ENCODE measurements at regions of chr20 and their contacts with region 1.

Region 1: GRCh38 chr20:3818155-3819151 is 1.9 kb upstream of the AP5S1 start:
- DNase-seq: peak; percentile 81
- H3K4me3 ChIP-seq: no peak overlapping the region
- H3K27ac ChIP-seq: peak overlapping the region; percentile 58 to 99 (median 98)
- H3K4me1 ChIP-seq: peaks cover 21 to 79% (median 55%) of the 10 kb centered on the region in 6 donors
- H3K27me3 ChIP-seq: no peaks in the 10 kb centered on the region
- CTCF ChIP-seq: peak in 9 of 11 experiments; percentile 29 to 76 (median 61)
- POLR2A ChIP-seq: no peak

Region 2: DNA sequence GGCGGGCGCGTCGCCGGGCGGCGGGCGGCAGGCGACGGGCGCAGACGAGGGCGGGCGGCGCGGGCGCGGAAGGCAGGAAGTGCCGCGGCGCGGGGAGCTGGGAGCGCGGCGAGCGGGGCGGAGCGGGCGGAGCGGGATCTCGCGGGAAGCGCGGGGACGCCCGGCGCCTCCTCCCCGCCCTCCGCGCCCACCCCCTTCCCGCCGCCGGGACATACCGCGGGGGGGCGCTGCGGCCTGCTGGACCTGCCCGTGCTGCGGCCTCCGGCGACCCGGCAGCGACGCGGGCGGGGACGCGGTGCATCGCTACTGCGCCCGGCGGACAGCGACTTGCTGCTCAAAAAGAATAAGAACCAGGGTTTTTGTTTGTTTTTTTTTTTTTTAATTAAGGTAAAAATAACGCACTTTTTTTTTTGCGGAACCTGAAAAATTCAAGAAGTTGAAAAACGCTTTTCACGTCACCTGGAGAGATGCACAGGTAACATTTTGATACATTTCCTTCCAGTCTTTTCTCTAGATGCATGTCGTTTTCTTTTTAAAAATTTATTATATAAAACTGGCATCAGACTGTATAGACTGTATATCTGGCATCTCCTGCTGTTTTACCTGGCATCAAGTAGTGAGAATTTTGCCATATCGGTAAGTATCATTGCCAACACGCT is 31.7 kb before region 1 on chr20 and contains the start of gene CENPB:
- intact Hi-C with region 1: loop called (anchors 2 kb)
- DNase-seq: peak; percentile 97
- H3K4me3 ChIP-seq: peak within 1 kb of the TSS; percentile 41 to 83 (median 50)
- H3K27ac ChIP-seq: peak within 1 kb of the TSS; percentile 69 to 89 (median 84)
- H3K4me1 ChIP-seq: peaks cover 21 to 68% (median 50%) of the 10 kb centered on the region in 6 donors
- H3K27me3 ChIP-seq: no peaks in the 10 kb centered on the region
- CTCF ChIP-seq: peak; percentile 49 to 96 (median 90)
- POLR2A ChIP-seq: no peak
- total RNA-seq, gene CENPB: 41.8 to 84.7 (median 57.9) TPM

Measured in spleen (tissue), 13 donors.